Calu3 (cell line): ENCODE measurements at regions of chr3 and their contacts with region 1.

Region 1: DNA sequence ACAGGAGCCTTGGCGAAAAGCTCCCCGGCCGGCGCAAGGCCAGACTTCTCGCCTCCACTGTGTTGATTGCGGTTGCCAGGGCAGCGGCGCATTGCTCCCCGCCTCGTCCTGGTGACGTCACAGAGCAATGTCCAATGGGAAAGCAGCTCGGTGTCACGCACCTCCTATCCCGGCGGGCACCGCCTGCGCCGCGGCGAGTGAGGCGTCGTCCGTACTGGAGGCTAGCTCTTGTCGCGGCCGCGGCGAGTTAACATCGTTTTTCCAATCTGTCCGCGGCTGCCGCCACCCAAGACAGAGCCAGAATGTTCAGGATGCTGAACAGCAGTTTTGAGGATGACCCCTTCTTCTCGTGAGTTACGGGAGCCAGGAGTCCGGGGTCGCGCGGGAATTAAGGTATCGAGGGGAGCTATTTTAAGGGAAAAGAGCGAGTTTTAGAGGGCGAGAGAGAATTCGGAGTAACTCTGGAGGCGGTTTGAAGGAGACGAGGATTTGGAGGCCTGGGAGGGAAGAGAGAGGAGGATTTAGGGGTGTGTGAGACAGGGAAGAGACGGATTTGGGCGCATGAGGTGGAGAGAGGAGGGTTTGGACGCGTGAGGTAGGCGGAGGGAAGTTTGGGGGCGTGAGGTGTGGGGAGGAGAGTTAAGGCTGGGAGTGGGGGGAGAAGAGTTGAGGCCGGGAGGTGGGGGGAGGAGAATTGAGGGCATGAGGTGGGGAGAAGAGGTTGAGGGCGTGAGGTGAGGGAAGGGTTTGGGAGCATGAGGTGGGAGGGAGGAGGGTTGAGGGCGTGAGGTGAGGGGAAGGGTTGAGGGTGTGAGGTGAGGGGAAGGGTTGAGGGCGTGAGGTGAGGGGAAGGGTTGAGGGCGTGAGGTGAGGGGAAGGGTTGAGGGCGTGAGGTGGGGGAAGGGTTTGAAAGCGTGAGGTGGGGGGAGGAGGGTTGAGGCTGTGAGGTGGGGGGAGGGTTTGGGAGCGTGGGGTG is at the start of gene MLF1:
- DNase-seq: peak; percentile 100
- H3K4me3 Mint-ChIP-seq: peak within 1 kb of the TSS; percentile 83
- H3K27ac Mint-ChIP-seq: peak within 1 kb of the TSS; percentile 93
- H3K4me1 Mint-ChIP-seq: peaks cover 13% of the 10 kb centered on the region
- H3K27me3 Mint-ChIP-seq: no peaks in the 10 kb centered on the region
- CTCF ChIP-seq: no peak
- total RNA-seq, gene MLF1: 53.0 and 53.1 TPM in 2 replicates

Region 2: GRCh38 chr3:158368271-158368670 is 203.0 kb before region 1 on chr3:
- CTCF ChIA-PET with region 1: no interaction called
- intact Hi-C with region 1: no loop called
- DNase-seq: no peak
- H3K4me3 Mint-ChIP-seq: no peak overlapping the region
- H3K27ac Mint-ChIP-seq: no peak overlapping the region
- H3K4me1 Mint-ChIP-seq: peaks cover 12% of the 10 kb centered on the region
- H3K27me3 Mint-ChIP-seq: no peaks in the 10 kb centered on the region
- CTCF ChIP-seq: no peak

Region 3: DNA sequence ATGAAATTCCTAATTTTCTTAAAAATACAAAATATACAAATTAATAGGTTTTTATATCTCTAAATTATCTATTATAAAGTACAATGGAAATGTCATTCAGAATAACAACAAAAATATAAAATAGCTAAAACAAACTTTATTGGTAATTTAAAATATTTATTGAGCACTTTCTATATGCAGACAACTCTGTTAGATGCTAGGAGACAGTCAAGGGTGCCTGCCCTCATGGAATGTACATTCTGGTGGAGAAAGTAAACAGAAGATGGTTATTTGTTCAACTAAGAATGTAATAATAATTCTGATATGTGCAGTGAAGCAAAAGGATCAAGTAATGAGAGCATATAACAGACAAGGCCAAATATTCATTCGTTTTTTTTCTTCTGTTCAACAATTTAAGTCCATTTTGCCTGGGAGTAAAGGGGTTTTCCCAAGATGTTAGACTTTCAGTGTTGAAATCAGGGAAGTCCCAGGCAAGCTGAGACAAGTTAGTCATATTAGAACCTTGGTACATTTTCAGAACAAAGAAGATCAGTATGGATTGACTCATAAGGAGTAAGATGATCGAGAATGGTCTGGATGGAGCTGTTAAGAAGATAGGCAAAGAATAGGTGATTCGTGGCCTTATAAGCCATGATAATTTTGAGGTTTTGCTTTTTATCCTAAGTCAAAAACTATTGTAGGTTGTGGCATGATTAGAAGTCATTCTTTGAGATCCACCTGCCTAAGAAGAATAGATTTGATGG is 150.5 kb before region 1 on chr3:
- CTCF ChIA-PET with region 1: no interaction called
- intact Hi-C with region 1: no loop called
- DNase-seq: no peak
- H3K4me3 Mint-ChIP-seq: no peak overlapping the region
- H3K27ac Mint-ChIP-seq: peak overlapping the region; percentile 14
- H3K4me1 Mint-ChIP-seq: peaks cover 19% of the 10 kb centered on the region
- H3K27me3 Mint-ChIP-seq: no peaks in the 10 kb centered on the region
- CTCF ChIP-seq: no peak

Region 4: DNA sequence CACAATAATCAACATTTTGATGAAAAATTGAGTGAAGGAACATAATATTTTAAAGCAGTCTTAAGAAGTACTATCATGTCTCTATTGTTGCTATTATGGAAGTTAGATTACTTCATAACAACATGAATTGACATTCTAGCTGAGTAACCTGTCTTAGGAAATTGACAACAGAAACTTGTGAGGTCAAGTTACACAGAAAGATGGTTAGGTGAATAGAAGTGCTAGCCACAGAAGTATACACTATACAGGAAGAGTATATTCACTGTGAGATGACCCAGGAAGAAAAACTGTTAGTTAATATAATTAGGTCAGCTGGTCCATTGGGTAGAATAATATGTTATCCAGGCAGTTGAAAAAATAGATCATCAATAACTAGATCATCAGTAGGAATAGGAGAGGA is 30.9 kb after region 1 on chr3:
- CTCF ChIA-PET with region 1: no interaction called
- intact Hi-C with region 1: no loop called
- DNase-seq: no peak
- H3K4me3 Mint-ChIP-seq: no peak overlapping the region
- H3K27ac Mint-ChIP-seq: no peak overlapping the region
- H3K4me1 Mint-ChIP-seq: no peaks in the 10 kb centered on the region
- H3K27me3 Mint-ChIP-seq: no peaks in the 10 kb centered on the region
- CTCF ChIP-seq: no peak

Region 5: DNA sequence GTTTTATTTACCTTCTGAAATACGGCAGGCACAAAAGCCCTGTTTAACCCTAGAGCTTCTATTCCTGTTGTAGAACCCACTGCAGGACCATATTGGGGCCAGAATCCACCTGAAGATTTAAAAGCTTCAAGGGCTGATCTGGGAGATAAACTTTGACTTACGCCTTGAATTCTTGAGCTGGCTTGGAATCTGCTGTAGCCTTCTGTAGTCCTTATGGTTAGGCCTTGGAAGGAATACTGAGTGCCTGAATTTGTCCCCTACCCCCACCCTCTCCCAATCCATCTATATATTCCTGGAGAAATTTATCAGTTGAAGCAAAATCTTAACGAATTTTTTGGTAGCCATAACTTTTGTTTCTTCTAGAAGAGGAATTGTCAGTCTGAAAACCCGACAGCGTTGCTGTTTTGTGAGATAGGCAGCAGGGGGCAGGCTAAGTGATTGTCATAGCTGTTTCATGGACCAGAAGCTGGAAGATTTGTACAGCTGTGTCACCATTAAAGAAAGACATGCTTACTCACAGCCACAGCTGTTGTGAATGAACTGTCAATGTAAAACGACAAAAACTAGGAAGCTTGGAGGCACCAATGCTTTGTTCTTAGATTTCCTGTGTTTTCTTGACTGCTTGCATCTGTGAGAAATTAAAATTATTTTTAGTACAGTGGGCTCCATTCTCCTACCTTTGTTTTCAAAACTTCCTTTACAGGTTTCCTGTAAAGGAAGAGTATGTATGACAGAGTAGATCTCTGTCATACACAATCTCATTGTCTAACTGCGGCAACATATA is 88.4 kb after region 1 on chr3:
- CTCF ChIA-PET with region 1: interaction called, 12 read pairs
- intact Hi-C with region 1: no loop called
- DNase-seq: peak; percentile 72
- H3K4me3 Mint-ChIP-seq: no peak overlapping the region
- H3K27ac Mint-ChIP-seq: no peak overlapping the region
- H3K4me1 Mint-ChIP-seq: peaks cover 25% of the 10 kb centered on the region
- H3K27me3 Mint-ChIP-seq: no peaks in the 10 kb centered on the region
- CTCF ChIP-seq: peak; percentile 86

Region 6: GRCh38 chr3:158768361-158768787 is 197.1 kb after region 1 on chr3:
- CTCF ChIA-PET with region 1: no interaction called
- intact Hi-C with region 1: no loop called
- DNase-seq: peak; percentile 86
- H3K4me3 Mint-ChIP-seq: peak overlapping the region; percentile 13
- H3K27ac Mint-ChIP-seq: peak overlapping the region; percentile 100
- H3K4me1 Mint-ChIP-seq: peaks cover 90% of the 10 kb centered on the region
- H3K27me3 Mint-ChIP-seq: no peaks in the 10 kb centered on the region
- CTCF ChIP-seq: no peak